Right cardiac atrium (tissue), 5 donors: ENCODE measurements at regions of chr1 and their contacts with region 1.

Region 1: DNA sequence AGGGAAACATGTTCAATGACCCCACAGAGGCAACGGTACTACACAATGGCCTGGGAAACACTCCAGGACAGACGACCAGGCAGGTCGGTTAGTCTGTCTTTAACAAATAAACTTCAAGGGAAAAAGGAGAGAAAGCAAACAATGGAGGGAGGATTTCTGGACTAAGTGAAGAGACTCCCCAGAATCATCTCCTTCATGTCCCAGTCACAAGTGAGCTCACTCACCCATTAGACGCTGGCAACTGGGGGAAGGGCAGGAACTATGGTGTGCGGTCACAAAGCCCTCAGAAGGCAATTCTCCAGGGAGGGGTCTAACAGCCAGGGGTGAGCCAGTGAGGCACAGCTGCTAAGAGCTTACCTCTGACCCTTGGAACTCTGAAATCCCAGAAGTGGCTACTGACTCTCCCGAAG is 55.7 kb upstream of the NADK start:
- DNase-seq: no peak
- ATAC-seq: peak in 1 of 2 donors; percentile 30
- H3K4me3 ChIP-seq: no peak overlapping the region
- H3K27ac ChIP-seq: no peak overlapping the region
- H3K4me1 ChIP-seq: peaks cover 9% of the 10 kb centered on the region
- H3K27me3 ChIP-seq: no peaks in the 10 kb centered on the region

Region 2: DNA sequence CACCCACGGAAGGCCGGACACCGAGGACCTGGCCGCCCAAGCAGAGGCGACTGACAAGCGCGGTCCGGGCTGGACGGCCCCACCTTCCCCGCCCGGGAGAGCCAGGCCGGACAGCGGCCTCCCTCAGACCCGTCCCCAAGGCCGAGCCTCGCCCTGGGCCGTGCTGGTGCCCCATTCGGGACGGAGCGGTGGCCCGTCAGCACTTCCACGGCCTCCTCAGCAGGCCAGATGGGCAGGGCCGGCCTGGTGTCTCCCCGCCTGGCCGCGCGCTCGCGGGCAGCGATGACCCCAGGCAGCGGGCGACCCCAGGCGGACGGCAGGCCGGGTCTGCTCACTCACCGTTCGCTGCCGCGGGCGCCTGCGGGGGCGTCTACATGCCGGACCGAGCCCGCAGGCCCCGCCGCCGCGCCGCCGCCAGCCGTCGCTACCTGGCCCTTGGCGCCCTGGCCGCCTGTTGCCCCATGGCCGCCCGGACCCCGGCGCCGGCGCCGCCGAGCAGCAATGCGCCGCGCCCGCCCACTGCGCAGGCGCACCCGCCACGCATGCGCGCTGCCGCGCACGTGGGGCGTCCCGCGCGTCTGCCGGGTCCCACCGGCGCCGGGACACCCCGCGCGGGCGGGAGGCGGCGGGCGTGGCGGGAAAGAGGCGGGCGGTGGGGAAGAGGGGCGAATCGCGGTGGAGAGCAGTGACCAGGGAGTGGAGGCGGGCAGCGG is 55.8 kb before region 1 on chr1 and contains the start of gene NADK:
- intact Hi-C with region 1: no loop called
- DNase-seq: peak; percentile 65 to 90 (median 89)
- ATAC-seq: peak; percentile 15 to 60
- H3K4me3 ChIP-seq: peak within 1 kb of the TSS; percentile 87
- H3K27ac ChIP-seq: peak within 1 kb of the TSS; percentile 93
- H3K4me1 ChIP-seq: peaks cover 30% of the 10 kb centered on the region
- H3K27me3 ChIP-seq: no peaks in the 10 kb centered on the region
- total RNA-seq, gene NADK: 31.8 to 42.8 (median 38.2) TPM

Region 3: GRCh38 chr1:1890506-1891348 is 56.8 kb after region 1 on chr1 and contains the start of gene GNB1:
- intact Hi-C with region 1: loop called in 1 of 4 experiments (anchors 10 kb)
- DNase-seq: peak; percentile 88 to 96 (median 96)
- ATAC-seq: peak; percentile 84 to 85
- H3K4me3 ChIP-seq: peak within 1 kb of the TSS; percentile 99
- H3K27ac ChIP-seq: peak within 1 kb of the TSS; percentile 94
- H3K4me1 ChIP-seq: peaks cover 22% of the 10 kb centered on the region
- H3K27me3 ChIP-seq: no peaks in the 10 kb centered on the region
- total RNA-seq, gene GNB1: 152 to 205 (median 174) TPM